CD4-positive, alpha-beta T cell (primary cell): ENCODE measurements at regions of chr18 and their contacts with region 1.

Region 1: DNA sequence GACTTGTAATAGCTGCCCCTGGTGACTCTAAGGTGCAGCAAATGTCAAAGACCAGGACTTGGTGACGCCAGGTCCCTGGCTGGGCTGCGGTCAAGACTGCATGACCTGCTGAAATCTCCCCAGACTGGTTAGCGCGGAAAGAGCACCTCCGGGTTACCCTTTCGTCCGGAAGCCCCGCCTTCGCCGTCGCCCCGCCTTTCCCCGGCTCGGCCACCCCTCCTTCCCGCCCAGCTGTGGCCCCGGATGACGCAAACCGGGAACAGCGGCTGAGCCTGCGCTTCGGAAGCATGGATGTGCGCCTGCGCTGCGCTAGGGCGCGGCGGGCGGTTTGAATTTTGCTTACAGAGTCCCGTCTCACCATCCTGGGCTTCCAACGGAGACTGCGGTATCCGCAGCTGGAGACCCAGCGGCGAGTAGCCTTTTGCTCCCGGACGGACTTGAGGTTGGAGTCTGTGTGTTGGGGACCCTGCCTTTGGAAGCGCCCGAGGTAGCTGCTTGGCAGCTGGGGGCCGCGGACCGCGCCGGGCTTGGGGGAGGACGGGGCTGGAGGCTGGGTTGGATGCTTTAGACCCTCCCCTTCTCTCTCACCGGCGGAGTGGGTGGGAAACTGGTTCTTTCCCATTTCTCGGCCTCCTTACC is at the start of gene SKA1:
- DNase-seq: peak; percentile 84 to 96 (median 90)
- ATAC-seq: peak; percentile 100
- H3K4me3 ChIP-seq: peak within 1 kb of the TSS; percentile 77
- H3K4me3 Mint-ChIP-seq: peak within 1 kb of the TSS; percentile 80
- H3K27ac ChIP-seq: peak within 1 kb of the TSS; percentile 56 to 58
- H3K27ac Mint-ChIP-seq: peak within 1 kb of the TSS; percentile 81
- H3K4me1 ChIP-seq: peaks cover 12% of the 10 kb centered on the region
- H3K4me1 Mint-ChIP-seq: peaks cover 14% of the 10 kb centered on the region
- H3K27me3 ChIP-seq: peaks cover 0 to 3% of the 10 kb centered on the region in 2 experiments
- H3K27me3 Mint-ChIP-seq: no peaks in the 10 kb centered on the region
- CTCF ChIP-seq: no peak
- total RNA-seq, gene SKA1: 0.08 to 0.20 TPM

Region 2: GRCh38 chr18:48538531-48539405 is 1836.1 kb before region 1 on chr18 and contains the start of gene CTIF:
- CTCF ChIA-PET with region 1: no interaction called
- POLR2A ChIA-PET with region 1: no interaction called
- intact Hi-C with region 1: loop called in 1 of 2 experiments (anchors 5 kb)
- DNase-seq: peak; percentile 23 to 80 (median 46)
- ATAC-seq: peak; percentile 61
- H3K4me3 ChIP-seq: peak within 1 kb of the TSS; percentile 74
- H3K4me3 Mint-ChIP-seq: peak within 1 kb of the TSS; percentile 95
- H3K27ac ChIP-seq: no peak within 1 kb of the TSS
- H3K27ac Mint-ChIP-seq: no peak within 1 kb of the TSS
- H3K4me1 ChIP-seq: peaks cover 24% of the 10 kb centered on the region
- H3K4me1 Mint-ChIP-seq: peaks cover 3% of the 10 kb centered on the region
- H3K27me3 ChIP-seq: peaks cover 10 to 12% of the 10 kb centered on the region in 2 experiments
- H3K27me3 Mint-ChIP-seq: peaks cover 29% of the 10 kb centered on the region
- CTCF ChIP-seq: no peak
- total RNA-seq, gene CTIF: 1.1 to 2.9 TPM

Region 3: GRCh38 chr18:49813319-49814146 is 561.3 kb before region 1 on chr18 and contains the start of gene ACAA2:
- CTCF ChIA-PET with region 1: no interaction called
- POLR2A ChIA-PET with region 1: no interaction called
- intact Hi-C with region 1: loop called in 1 of 2 experiments (anchors 5 kb)
- DNase-seq: peak; percentile 53 to 89 (median 72)
- ATAC-seq: peak; percentile 80
- H3K4me3 ChIP-seq: peak within 1 kb of the TSS; percentile 96
- H3K4me3 Mint-ChIP-seq: peak within 1 kb of the TSS; percentile 100
- H3K27ac ChIP-seq: peak within 1 kb of the TSS; percentile 90 to 96
- H3K27ac Mint-ChIP-seq: peak within 1 kb of the TSS; percentile 87
- H3K4me1 ChIP-seq: peaks cover 35% of the 10 kb centered on the region
- H3K4me1 Mint-ChIP-seq: peaks cover 63% of the 10 kb centered on the region
- H3K27me3 ChIP-seq: no peaks in the 10 kb centered on the region
- H3K27me3 Mint-ChIP-seq: no peaks in the 10 kb centered on the region
- CTCF ChIP-seq: no peak
- total RNA-seq, gene ACAA2: 5.7 to 6.2 TPM

Region 4: GRCh38 chr18:50266248-50266704 is 108.6 kb before region 1 on chr18 and contains the start of gene CFAP53:
- CTCF ChIA-PET with region 1: interaction called, 5 read pairs
- POLR2A ChIA-PET with region 1: no interaction called
- intact Hi-C with region 1: loop called in 1 of 2 experiments (anchors 5 kb)
- DNase-seq: peak in 13 of 14 experiments; percentile 54 to 92 (median 80)
- ATAC-seq: peak; percentile 77
- H3K4me3 ChIP-seq: peak within 1 kb of the TSS; percentile 66
- H3K4me3 Mint-ChIP-seq: peak within 1 kb of the TSS; percentile 93
- H3K27ac ChIP-seq: peak within 1 kb of the TSS; percentile 13 to 64
- H3K27ac Mint-ChIP-seq: peak within 1 kb of the TSS; percentile 45
- H3K4me1 ChIP-seq: peaks cover 25% of the 10 kb centered on the region
- H3K4me1 Mint-ChIP-seq: peaks cover 30% of the 10 kb centered on the region
- H3K27me3 ChIP-seq: no peaks in the 10 kb centered on the region
- H3K27me3 Mint-ChIP-seq: no peaks in the 10 kb centered on the region
- CTCF ChIP-seq: no peak
- total RNA-seq, gene CFAP53: 0.33 to 0.47 TPM

Region 5: DNA sequence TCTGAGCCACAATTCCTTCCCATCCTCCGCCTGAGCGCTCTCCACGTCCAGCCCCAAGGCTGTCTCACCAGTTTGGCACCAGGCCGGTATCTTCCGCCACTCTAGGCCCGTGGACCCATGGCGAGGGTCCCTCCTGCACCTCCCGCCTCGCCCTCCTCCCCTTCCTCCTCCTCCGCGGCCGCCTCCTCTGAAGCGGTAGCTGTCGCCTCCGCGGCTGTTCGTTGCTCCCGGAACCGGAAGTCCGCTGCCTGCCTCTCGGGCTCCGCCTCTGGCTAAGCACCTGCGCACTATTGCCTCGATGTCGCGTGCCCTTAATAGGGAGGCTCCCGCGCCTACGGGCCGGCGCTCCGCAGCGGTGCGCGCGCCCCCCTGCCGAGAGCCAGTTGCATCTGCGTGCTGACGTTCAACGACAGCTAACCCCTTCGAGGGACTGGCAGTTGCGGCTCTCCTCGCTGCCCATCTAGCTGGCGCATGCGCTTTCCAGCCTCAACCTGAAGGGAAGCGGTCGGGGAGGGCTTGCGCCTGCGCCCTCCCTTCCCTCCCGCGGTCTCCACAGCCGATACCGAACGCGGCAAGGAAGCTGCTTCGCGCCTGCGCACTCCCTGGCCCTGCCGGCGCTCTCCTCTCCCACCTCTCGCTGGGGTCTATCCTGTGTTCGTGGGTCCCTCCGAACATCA is 93.4 kb before region 1 on chr18 and contains the start of gene MBD1:
- CTCF ChIA-PET with region 1: no interaction called
- POLR2A ChIA-PET with region 1: interaction called, 13 read pairs
- intact Hi-C with region 1: loop called in 1 of 2 experiments (anchors 5 kb)
- DNase-seq: peak; percentile 93 to 100 (median 96)
- ATAC-seq: peak; percentile 90
- H3K4me3 ChIP-seq: peak within 1 kb of the TSS; percentile 93
- H3K4me3 Mint-ChIP-seq: peak within 1 kb of the TSS; percentile 100
- H3K27ac ChIP-seq: peak within 1 kb of the TSS; percentile 84 to 90
- H3K27ac Mint-ChIP-seq: peak within 1 kb of the TSS; percentile 98
- H3K4me1 ChIP-seq: peaks cover 31% of the 10 kb centered on the region
- H3K4me1 Mint-ChIP-seq: peaks cover 38% of the 10 kb centered on the region
- H3K27me3 ChIP-seq: no peaks in the 10 kb centered on the region
- H3K27me3 Mint-ChIP-seq: no peaks in the 10 kb centered on the region
- CTCF ChIP-seq: no peak
- total RNA-seq, gene MBD1: 103 to 107 TPM

Region 6: DNA sequence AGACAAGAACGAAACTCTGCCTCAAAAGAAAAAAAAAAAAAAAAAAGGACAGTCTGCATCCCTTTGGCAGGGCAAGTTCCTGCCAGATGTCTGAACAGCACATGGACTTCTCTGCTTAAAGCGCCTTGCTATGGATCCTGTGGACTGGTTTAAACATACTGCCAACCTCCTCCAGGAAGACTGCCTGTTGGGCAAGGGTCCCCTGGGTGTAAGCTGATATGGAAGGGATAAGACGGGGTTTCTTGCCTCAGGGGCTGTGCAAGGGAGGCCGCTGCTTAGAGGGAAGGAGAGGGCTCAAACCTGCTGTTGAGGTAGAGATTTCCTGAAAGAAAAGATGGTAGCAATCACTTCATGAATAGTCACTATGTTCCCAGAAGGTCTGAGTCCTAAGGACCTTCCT is 22.2 kb after region 1 on chr18:
- CTCF ChIA-PET with region 1: no interaction called
- POLR2A ChIA-PET with region 1: no interaction called
- intact Hi-C with region 1: no loop called
- DNase-seq: no peak
- ATAC-seq: no peak
- H3K4me3 ChIP-seq: no peak overlapping the region
- H3K4me3 Mint-ChIP-seq: no peak overlapping the region
- H3K27ac ChIP-seq: no peak overlapping the region
- H3K27ac Mint-ChIP-seq: no peak overlapping the region
- H3K4me1 ChIP-seq: no peaks in the 10 kb centered on the region
- H3K4me1 Mint-ChIP-seq: no peaks in the 10 kb centered on the region
- H3K27me3 ChIP-seq: peaks cover 15 to 31% of the 10 kb centered on the region in 2 experiments
- H3K27me3 Mint-ChIP-seq: peaks cover 37% of the 10 kb centered on the region
- CTCF ChIP-seq: no peak